Right ventricle myocardium inferior (tissue), 1 donor: ENCODE measurements at regions of chr12 and their contacts with region 1.

Region 1: GRCh38 chr12:6688999-6689882 is at the start of gene ZNF384:
- DNase-seq: peak; percentile 97
- ATAC-seq: peak; percentile 94
- total RNA-seq, gene ZNF384: 26.0 TPM

Region 2: DNA sequence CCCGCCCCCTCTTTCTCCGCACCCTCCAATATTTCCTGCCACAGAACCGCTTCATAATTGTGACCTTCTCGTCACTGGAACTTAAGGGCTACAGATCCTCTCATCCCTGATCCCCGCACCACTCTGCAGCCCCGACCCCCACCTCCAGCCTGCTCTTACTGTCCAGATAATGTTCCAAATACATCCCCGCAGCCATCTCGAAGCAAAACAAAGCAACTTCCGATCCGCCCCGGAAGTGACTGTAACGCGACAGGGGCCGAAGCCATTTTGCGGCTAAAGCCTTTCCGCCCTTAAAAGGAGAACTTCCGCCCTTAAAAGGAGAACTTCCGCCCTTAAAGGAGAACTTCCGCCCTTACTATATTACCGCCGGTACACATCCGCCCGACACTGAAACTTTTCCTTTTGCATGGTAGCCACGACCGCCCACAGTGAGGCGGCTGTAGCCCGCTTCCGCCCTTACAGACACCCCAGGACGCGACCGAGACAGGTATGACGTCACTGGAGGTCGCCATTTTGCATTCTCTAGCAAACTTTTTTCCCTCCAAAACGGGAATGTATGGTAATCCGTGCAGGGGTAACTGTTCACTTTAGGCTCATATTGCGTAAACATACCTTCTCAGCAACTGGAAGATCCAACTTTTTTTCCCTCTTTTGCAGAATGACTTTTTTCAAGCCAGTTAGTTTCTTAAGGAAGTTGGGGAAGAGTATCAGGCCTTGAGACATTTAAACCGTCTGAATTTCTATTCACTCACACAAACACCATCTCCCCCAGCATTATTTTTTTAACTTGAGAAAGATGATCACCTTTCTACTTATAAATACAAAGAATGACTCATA is 26.1 kb before region 1 on chr12 and contains the start of gene ING4:
- intact Hi-C with region 1: loop called (anchors 1 kb)
- DNase-seq: peak; percentile 99
- ATAC-seq: peak; percentile 100
- total RNA-seq, gene ING4: 21.1 TPM

Region 3: GRCh38 chr12:6735448-6736191 is 46.4 kb after region 1 on chr12:
- intact Hi-C with region 1: no loop called
- DNase-seq: peak; percentile 82
- ATAC-seq: peak; percentile 80